Heart left ventricle (tissue), 16 donors: ENCODE measurements at regions of chr11 and their contacts with region 1.

Region 1: GRCh38 chr11:128776424-128777284 is 82.8 kb downstream of the FLI1 start:
- DNase-seq: peak; percentile 61 to 81 (median 67)
- ATAC-seq: peak; percentile 47 to 76 (median 53)
- H3K4me3 ChIP-seq: peak overlapping the region in 2 of 12 donors; percentile 19 to 25
- H3K27ac ChIP-seq: peak overlapping the region in 5 of 12 donors; percentile 25 to 60 (median 42)
- H3K4me1 ChIP-seq: peaks cover 0 to 52% (median 31%) of the 10 kb centered on the region in 12 donors
- H3K27me3 ChIP-seq: no peaks in the 10 kb centered on the region
- CTCF ChIP-seq: peak; percentile 23 to 72 (median 44)
- POLR2A ChIP-seq: no peak

Region 2: DNA sequence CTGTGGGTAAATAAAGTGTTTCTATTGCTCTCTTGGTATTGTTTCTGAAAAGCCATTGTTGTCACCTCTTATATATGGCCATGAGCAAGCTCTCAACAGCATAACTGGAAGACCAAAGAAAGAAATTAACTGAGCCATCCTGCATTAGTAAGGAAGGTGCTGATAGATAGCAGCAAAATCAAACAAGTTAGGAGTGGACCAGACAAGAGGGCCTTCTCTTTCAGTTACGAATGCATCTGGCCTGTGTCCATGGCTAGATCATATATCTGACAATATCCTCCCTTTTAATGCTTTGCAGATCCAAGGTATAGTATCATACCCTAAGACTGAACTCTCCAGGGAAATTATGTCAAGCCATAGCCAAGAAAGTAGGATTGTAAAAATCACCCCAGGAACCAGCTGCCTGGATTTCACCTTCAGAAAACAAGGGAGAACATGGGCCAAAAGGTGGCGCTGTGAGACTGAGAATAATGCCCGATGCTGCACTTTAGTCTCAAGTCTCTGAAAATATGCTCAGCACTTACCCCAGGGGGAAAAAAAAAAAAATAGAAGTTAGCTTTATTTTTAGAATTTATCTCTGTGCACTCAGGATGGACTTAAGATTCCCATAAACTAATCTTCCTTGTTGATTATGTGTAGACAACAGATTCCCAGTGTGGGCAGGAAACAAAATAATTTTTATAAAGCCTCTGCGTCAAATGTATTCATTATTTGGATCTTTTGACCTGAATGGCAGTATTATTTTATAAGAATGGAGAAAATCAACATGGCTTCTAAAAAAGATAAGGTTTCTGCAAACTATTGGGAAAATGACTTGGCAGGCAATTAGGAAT is 604.4 kb before region 1 on chr11:
- intact Hi-C with region 1: loop called in 1 of 10 experiments (anchors 10 kb)
- DNase-seq: peak; percentile 74 to 83 (median 80)
- ATAC-seq: peak in 3 of 4 donors; percentile 77 to 85 (median 84)
- H3K4me3 ChIP-seq: no peak overlapping the region
- H3K27ac ChIP-seq: peak overlapping the region in 1 of 12 donors; percentile 19
- H3K4me1 ChIP-seq: peaks cover 0 to 8% (median 0%) of the 10 kb centered on the region in 12 donors
- H3K27me3 ChIP-seq: peaks cover 0 to 7% (median 0%) of the 10 kb centered on the region in 9 donors
- CTCF ChIP-seq: peak; percentile 50 to 91 (median 80)
- POLR2A ChIP-seq: no peak

Region 3: GRCh38 chr11:128824191-128825049 is 47.8 kb after region 1 on chr11:
- intact Hi-C with region 1: loop called in 3 of 10 experiments (anchors 5 kb)
- DNase-seq: peak in 3 of 5 donors; percentile 24 to 60 (median 31)
- ATAC-seq: peak in 3 of 4 donors; percentile 26 to 49 (median 44)
- H3K4me3 ChIP-seq: peak overlapping the region in 7 of 12 donors; percentile 5 to 36 (median 26)
- H3K27ac ChIP-seq: peak overlapping the region in 5 of 12 donors; percentile 35 to 63 (median 43)
- H3K4me1 ChIP-seq: peaks cover 0 to 12% (median 2%) of the 10 kb centered on the region in 12 donors
- H3K27me3 ChIP-seq: no peaks in the 10 kb centered on the region
- CTCF ChIP-seq: no peak
- POLR2A ChIP-seq: no peak

Region 4: GRCh38 chr11:128841461-128842072 is 64.9 kb after region 1 on chr11:
- intact Hi-C with region 1: no loop called
- DNase-seq: no peak
- ATAC-seq: no peak
- H3K4me3 ChIP-seq: no peak overlapping the region
- H3K27ac ChIP-seq: no peak overlapping the region
- H3K4me1 ChIP-seq: peaks cover 0 to 29% (median 7%) of the 10 kb centered on the region in 12 donors
- H3K27me3 ChIP-seq: no peaks in the 10 kb centered on the region
- CTCF ChIP-seq: no peak
- POLR2A ChIP-seq: no peak

Region 5: DNA sequence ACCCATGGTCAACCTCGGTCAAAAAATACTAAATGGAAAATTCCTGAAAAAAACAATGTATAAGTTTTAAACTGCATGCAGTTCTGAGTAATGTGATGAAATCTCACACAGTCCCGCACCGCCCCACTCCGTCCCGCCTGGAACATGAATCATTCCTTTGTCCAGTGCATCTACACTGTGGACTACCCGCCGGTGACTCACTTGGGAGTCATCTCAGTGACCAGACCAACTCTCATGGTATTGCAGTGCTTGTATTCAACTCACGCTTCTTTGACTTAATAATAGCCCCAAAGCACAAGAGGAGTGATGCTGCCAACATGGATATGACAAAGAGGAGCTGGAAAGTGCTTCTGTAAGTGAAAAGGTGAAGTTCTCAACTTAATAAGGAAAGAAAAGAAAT is 366.7 kb after region 1 on chr11:
- intact Hi-C with region 1: no loop called
- DNase-seq: peak; percentile 22 to 90 (median 75)
- ATAC-seq: peak in 3 of 4 donors; percentile 82 to 100 (median 100)
- H3K4me3 ChIP-seq: peak overlapping the region in 1 of 12 donors; percentile 6
- H3K27ac ChIP-seq: no peak overlapping the region
- H3K4me1 ChIP-seq: peaks cover 0 to 7% (median 0%) of the 10 kb centered on the region in 12 donors
- H3K27me3 ChIP-seq: no peaks in the 10 kb centered on the region
- CTCF ChIP-seq: no peak
- POLR2A ChIP-seq: no peak